ENCODE measurements at regions of chr17 and their contacts with region 1.

Region 1: GRCh38 chr17:63714547-63715277 is 14.8 kb upstream of the LIMD2 start:
- DNase-seq: no peak
- H3K4me3 ChIP-seq: no peak overlapping the region
- H3K27ac ChIP-seq: no peak overlapping the region
- H3K4me1 ChIP-seq: no peaks in the 10 kb centered on the region
- H3K27me3 ChIP-seq: no peaks in the 10 kb centered on the region
- CTCF ChIP-seq: no peak

Region 2: DNA sequence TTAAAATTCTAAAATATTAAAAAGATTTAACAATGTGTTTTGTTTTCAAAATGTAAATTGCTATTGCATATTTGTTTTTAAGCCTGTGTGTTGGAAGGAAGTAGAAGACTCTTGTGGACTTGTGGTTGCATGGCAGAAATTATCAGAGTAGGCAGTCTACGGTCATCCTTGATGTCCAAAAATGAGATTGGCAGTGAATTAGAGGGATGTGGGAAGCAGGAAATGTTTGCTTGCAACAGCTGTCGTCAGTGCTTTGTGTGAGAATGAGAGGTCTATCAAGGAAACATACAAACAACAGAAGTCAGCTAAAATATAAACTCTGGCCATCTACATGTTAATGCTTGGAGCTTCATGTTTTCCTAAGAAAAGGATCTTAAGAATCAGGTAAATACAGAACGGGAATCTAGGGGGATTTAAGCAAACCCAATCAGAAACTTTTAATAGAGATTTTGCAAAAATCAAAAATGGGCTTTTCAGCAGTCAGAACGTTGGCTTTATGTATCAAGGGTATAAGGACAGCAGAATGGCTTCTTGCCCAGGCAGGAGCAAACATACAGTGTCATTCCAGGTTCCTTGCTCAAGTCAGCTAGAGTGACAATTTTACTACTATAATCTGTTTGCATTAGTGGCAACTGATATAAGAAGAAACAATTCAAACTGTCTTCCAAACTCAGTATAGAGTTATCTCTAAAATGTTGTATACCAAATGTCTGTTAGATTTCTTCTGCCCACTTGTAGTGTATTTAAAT is 465.3 kb before region 1 on chr17:
- CTCF ChIA-PET with region 1: no interaction called
- POLR2A ChIA-PET with region 1: no interaction called
- intact Hi-C with region 1: no loop called
- DNase-seq: no peak
- H3K4me3 ChIP-seq: no peak overlapping the region
- H3K27ac ChIP-seq: no peak overlapping the region
- H3K4me1 ChIP-seq: peaks cover 5% of the 10 kb centered on the region
- H3K27me3 ChIP-seq: no peaks in the 10 kb centered on the region
- CTCF ChIP-seq: no peak

Region 3: DNA sequence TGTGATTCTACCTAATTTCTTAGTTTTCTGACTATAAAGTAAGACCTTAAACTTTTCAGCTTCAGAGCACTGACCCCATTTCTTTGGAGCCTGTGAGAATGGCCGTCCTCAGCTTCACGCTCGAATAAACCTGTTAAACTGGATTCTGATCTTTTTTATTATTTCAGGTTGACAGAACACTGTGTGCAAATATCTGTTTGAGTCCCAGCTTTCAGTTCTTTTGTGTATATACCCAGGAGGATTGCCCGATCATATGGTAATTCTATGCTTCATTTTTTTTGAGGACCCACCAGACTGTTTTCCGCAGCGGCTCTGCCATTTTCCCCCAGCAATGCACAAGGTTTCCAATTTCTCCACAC is 211.4 kb before region 1 on chr17:
- CTCF ChIA-PET with region 1: no interaction called
- POLR2A ChIA-PET with region 1: interaction called, 12 read pairs
- intact Hi-C with region 1: no loop called
- DNase-seq: no peak
- H3K4me3 ChIP-seq: no peak overlapping the region
- H3K27ac ChIP-seq: no peak overlapping the region
- H3K4me1 ChIP-seq: no peaks in the 10 kb centered on the region
- H3K27me3 ChIP-seq: peaks cover 19% of the 10 kb centered on the region
- CTCF ChIP-seq: no peak

Region 4: GRCh38 chr17:63697341-63698286 is 17.1 kb before region 1 on chr17:
- CTCF ChIA-PET with region 1: no interaction called
- POLR2A ChIA-PET with region 1: interaction called, 15 read pairs
- intact Hi-C with region 1: no loop called
- DNase-seq: peak; percentile 63
- H3K4me3 ChIP-seq: peak overlapping the region; percentile 76
- H3K27ac ChIP-seq: peak overlapping the region; percentile 84
- H3K4me1 ChIP-seq: peaks cover 41% of the 10 kb centered on the region
- H3K27me3 ChIP-seq: no peaks in the 10 kb centered on the region
- CTCF ChIP-seq: peak; percentile 68

Region 5: GRCh38 chr17:63785556-63785955 is 70.8 kb after region 1 on chr17:
- CTCF ChIA-PET with region 1: no interaction called
- POLR2A ChIA-PET with region 1: no interaction called
- intact Hi-C with region 1: no loop called
- DNase-seq: no peak
- H3K4me3 ChIP-seq: no peak overlapping the region
- H3K27ac ChIP-seq: no peak overlapping the region
- H3K4me1 ChIP-seq: no peaks in the 10 kb centered on the region
- H3K27me3 ChIP-seq: no peaks in the 10 kb centered on the region
- CTCF ChIP-seq: no peak

Region 6: DNA sequence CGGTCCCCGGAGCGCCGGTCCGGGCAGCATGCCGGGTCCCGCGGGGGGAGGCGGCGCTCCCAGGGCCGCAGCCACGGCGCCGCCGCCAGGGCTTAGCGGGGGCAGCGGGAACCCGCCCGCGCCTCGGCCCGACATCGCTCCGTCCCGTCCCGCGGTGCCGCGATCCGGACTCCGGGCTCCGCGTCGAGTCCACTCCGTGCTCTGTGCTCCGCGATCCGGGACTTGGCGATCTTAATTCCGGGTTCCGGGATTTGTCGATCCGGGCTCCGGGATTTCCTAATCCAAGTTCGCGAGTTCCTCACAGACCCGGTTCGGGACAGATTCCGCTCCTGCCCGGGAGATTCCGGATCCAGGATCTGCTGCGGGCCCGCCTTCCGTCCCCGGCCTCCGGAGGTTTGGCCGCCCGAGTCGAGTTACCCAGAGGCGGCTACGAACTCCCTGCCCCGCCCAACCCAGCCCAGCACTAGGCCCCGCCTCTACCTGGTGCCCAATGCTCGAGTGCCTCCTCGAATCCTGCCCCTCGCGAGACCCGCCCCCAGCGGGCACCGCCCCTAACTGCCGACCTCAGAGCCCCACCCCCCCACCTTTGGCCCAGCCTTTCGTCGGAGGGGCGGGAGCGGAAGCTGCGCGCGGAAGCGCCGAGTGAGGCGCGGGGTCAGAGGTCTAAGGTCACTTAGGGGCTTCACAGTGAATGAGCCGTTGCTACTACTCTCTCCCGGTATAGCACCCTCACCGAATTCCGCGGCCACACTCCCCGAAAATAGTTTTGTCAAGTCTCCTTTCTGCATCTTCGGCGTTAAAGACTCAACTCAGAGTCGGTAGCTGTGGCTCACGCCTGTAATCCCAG is 128.1 kb after region 1 on chr17 and contains the start of gene SMARCD2:
- CTCF ChIA-PET with region 1: no interaction called
- POLR2A ChIA-PET with region 1: interaction called, 11 read pairs
- intact Hi-C with region 1: no loop called
- DNase-seq: peak; percentile 99
- H3K4me3 ChIP-seq: peak within 1 kb of the TSS; percentile 95
- H3K27ac ChIP-seq: peak within 1 kb of the TSS; percentile 92
- H3K4me1 ChIP-seq: peaks cover 36% of the 10 kb centered on the region
- H3K27me3 ChIP-seq: no peaks in the 10 kb centered on the region
- CTCF ChIP-seq: no peak
- total RNA-seq, gene SMARCD2: 71.9 and 89.4 TPM in 2 replicates

Measured in A673 (cell line).